Sigmoid colon (tissue), 7 donors: ENCODE measurements at regions of chr2 and their contacts with region 1.

Region 1: GRCh38 chr2:183124222-183124956 is at the start of gene NUP35:
- DNase-seq: peak; percentile 92
- H3K4me3 ChIP-seq: peak within 1 kb of the TSS; percentile 65 to 76 (median 72)
- H3K27ac ChIP-seq: peak within 1 kb of the TSS; percentile 87 to 88 (median 88)
- H3K4me1 ChIP-seq: peaks cover 0 to 19% (median 14%) of the 10 kb centered on the region in 4 donors
- H3K27me3 ChIP-seq: no peaks in the 10 kb centered on the region
- CTCF ChIP-seq: no peak
- EP300 ChIP-seq: no peak
- POLR2A ChIP-seq: no peak
- total RNA-seq, gene NUP35: 12.9 to 19.7 (median 14.3) TPM

Region 2: GRCh38 chr2:182715896-182716668 is 408.3 kb before region 1 on chr2 and contains the start of gene DNAJC10:
- intact Hi-C with region 1: loop called (anchors 5 kb)
- DNase-seq: peak; percentile 90
- H3K4me3 ChIP-seq: peak within 1 kb of the TSS; percentile 78 to 90 (median 88)
- H3K27ac ChIP-seq: peak within 1 kb of the TSS; percentile 84 to 88 (median 88)
- H3K4me1 ChIP-seq: peaks cover 0 to 16% (median 10%) of the 10 kb centered on the region in 4 donors
- H3K27me3 ChIP-seq: no peaks in the 10 kb centered on the region
- CTCF ChIP-seq: no peak
- EP300 ChIP-seq: no peak
- POLR2A ChIP-seq: peak in 1 of 2 donors; percentile 35
- total RNA-seq, gene DNAJC10: 44.3 to 50.1 (median 47.8) TPM

Region 3: GRCh38 chr2:183038341-183039300 is 85.8 kb before region 1 on chr2 and contains the start of gene NCKAP1:
- intact Hi-C with region 1: loop called (anchors 2 kb)
- DNase-seq: peak; percentile 95
- H3K4me3 ChIP-seq: peak within 1 kb of the TSS; percentile 71 to 97 (median 88)
- H3K27ac ChIP-seq: peak within 1 kb of the TSS; percentile 96 to 99 (median 99)
- H3K4me1 ChIP-seq: peaks cover 0 to 43% (median 36%) of the 10 kb centered on the region in 4 donors
- H3K27me3 ChIP-seq: no peaks in the 10 kb centered on the region
- CTCF ChIP-seq: peak; percentile 28 to 97 (median 33)
- EP300 ChIP-seq: no peak
- POLR2A ChIP-seq: no peak
- total RNA-seq, gene NCKAP1: 160 to 206 (median 181) TPM

Region 4: GRCh38 chr2:183078465-183079138 is 45.8 kb before region 1 on chr2 and contains the start of gene DUSP19:
- intact Hi-C with region 1: loop called (anchors 1 kb)
- DNase-seq: peak; percentile 93
- H3K4me3 ChIP-seq: peak within 1 kb of the TSS; percentile 56 to 83 (median 72)
- H3K27ac ChIP-seq: peak within 1 kb of the TSS; percentile 86 to 97 (median 90)
- H3K4me1 ChIP-seq: peaks cover 0 to 20% (median 9%) of the 10 kb centered on the region in 4 donors
- H3K27me3 ChIP-seq: no peaks in the 10 kb centered on the region
- CTCF ChIP-seq: no peak
- EP300 ChIP-seq: no peak
- POLR2A ChIP-seq: peak; percentile 70 to 88
- total RNA-seq, gene DUSP19: 4.2 to 7.2 (median 6.0) TPM